ENCODE measurements at regions of chr3 and their contacts with region 1.

Region 1: DNA sequence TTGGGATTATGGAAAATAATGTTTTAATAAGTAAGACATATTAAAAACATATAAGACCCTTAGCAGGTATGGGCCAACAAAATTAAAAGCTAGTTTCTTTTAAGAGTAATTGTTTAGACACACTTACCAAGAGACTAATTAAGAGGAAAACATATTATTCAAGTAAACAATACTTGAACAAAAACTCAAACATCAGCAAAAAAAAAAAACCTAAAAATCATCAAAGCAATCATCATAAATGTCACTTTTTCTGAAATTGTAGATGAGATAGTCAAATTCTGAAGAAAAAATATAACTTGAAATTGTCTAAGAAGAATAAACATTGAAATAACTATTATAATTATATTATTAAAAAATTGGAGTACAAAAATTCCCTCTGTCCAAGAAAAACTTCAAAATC is 1318.2 kb downstream of the ZPLD1 start:
- DNase-seq: no peak
- ATAC-seq: no peak
- H3K4me3 ChIP-seq: no peak overlapping the region
- H3K4me3 Mint-ChIP-seq: no peak overlapping the region
- H3K27ac ChIP-seq: no peak overlapping the region
- H3K27ac Mint-ChIP-seq: no peak overlapping the region
- H3K4me1 ChIP-seq: no peaks in the 10 kb centered on the region
- H3K4me1 Mint-ChIP-seq: no peaks in the 10 kb centered on the region
- H3K27me3 ChIP-seq: no peaks in the 10 kb centered on the region
- H3K27me3 Mint-ChIP-seq: no peaks in the 10 kb centered on the region

Region 2: GRCh38 chr3:103372031-103372430 is 381.0 kb before region 1 on chr3:
- CTCF ChIA-PET with region 1: no interaction called
- POLR2A ChIA-PET with region 1: no interaction called
- DNase-seq: no peak
- ATAC-seq: no peak
- H3K4me3 ChIP-seq: no peak overlapping the region
- H3K4me3 Mint-ChIP-seq: no peak overlapping the region
- H3K27ac ChIP-seq: no peak overlapping the region
- H3K27ac Mint-ChIP-seq: no peak overlapping the region
- H3K4me1 ChIP-seq: no peaks in the 10 kb centered on the region
- H3K4me1 Mint-ChIP-seq: no peaks in the 10 kb centered on the region
- H3K27me3 ChIP-seq: no peaks in the 10 kb centered on the region
- H3K27me3 Mint-ChIP-seq: no peaks in the 10 kb centered on the region

Region 3: DNA sequence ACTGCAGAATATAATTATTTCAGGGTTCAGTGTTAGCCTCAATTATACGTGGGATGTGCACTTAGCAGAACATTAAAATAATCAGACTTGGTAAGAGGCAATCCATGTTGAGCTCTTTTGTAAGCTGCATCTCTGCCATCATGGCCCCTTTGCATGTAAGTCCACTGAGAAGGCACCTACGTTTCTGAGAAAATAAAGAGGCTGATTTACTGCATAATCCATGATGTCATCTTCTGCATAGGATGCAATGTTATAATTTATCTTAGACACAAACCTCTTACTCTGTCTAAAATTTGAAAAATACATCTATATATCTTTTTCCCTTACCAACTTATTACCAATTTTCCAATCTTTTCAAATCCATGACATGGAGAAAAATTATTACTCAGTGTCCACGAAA is 23.4 kb before region 1 on chr3:
- CTCF ChIA-PET with region 1: interaction called in 1 of 2 experiments, 4 read pairs
- POLR2A ChIA-PET with region 1: interaction called in 1 of 2 experiments, 10 read pairs
- DNase-seq: no peak
- ATAC-seq: no peak
- H3K4me3 ChIP-seq: no peak overlapping the region
- H3K4me3 Mint-ChIP-seq: no peak overlapping the region
- H3K27ac ChIP-seq: no peak overlapping the region
- H3K27ac Mint-ChIP-seq: no peak overlapping the region
- H3K4me1 ChIP-seq: no peaks in the 10 kb centered on the region
- H3K4me1 Mint-ChIP-seq: no peaks in the 10 kb centered on the region
- H3K27me3 ChIP-seq: no peaks in the 10 kb centered on the region
- H3K27me3 Mint-ChIP-seq: no peaks in the 10 kb centered on the region

Measured in T-cell (primary cell).